ENCODE measurements at regions of chr2 and their contacts with region 1.

Region 1: GRCh38 chr2:79041032-79041448 is 15.5 kb downstream of the REG3G start:
- DNase-seq: no peak

Region 2: DNA sequence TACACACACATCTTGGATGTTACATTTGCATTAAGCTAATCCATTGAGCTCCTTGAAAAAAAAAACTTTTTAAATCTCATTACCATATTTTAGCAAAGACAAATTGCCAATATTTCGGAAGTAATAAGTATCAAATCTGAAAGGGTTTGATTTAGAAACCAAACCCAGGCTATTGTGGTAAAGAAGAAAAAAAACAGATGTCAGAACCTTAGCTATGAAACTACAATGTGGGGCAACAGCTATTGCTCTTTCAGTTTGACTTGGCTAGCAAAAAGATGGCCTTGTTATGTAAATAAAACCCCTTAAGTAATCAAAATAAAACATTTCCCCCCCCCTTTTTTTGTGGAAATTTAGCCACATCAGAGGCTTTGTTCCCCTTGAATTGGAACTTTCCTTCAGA is 159.7 kb after region 1 on chr2:
- intact Hi-C with region 1: loop called (anchors 10 kb)
- DNase-seq: no peak

Region 3: DNA sequence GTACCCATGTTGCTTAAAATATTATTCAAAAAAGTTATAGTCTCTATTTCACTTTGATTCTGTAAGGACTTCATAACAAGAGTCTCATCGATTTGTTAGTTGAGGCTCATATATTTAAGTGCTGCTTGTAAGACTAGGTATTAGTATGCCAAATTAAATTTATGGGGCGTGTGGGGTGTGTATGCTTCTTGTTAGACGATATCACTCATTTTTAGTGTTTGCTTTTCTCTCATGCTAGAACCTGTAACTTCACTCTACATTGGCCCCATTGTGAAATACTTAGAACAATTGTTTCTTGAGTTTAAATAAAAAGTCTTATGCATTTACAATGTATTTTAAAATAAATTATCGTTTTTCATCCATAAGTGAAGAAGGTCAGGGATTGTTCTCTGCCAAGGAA is 535.4 kb after region 1 on chr2:
- intact Hi-C with region 1: no loop called
- DNase-seq: no peak